CD8-positive, alpha-beta T cell (primary cell): ENCODE measurements at regions of chr1 and their contacts with region 1.

Region 1: DNA sequence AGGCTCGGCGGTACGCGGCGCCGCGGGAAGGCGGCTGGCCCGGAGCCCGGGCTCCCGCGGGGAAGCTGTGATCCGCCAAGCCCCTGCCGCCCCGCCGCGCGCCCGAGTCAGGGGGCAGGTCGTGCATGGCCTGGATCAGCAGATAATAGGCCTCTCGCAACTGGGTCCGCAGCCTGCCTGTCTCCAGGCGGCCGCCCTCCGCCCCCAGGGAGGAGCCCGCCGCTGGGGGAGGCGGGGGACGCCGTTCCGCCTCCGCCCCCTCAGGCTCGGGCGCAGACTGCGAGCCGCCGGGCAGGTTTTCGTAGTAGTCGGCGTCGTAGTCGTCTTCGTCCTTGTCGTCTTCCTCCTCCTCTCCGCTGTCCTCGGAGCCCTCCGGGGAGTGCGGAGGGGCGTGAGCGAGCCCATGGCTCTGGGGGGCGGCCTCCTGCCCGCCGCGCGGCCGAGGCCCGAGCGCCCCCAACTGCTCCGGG is at the start of gene SYDE2:
- DNase-seq: peak; percentile 70 to 91 (median 79)
- ATAC-seq: peak; percentile 83
- H3K4me3 ChIP-seq: peak within 1 kb of the TSS; percentile 68 to 94
- H3K4me3 Mint-ChIP-seq: peak within 1 kb of the TSS; percentile 100
- H3K27ac ChIP-seq: peak within 1 kb of the TSS; percentile 63 to 94
- H3K27ac Mint-ChIP-seq: peak within 1 kb of the TSS; percentile 100
- H3K4me1 ChIP-seq: peaks cover 27% of the 10 kb centered on the region
- H3K4me1 Mint-ChIP-seq: peaks cover 48% of the 10 kb centered on the region
- H3K27me3 ChIP-seq: peaks cover 0 to 5% of the 10 kb centered on the region in 2 experiments
- H3K27me3 Mint-ChIP-seq: peaks cover 4% of the 10 kb centered on the region
- CTCF ChIP-seq: no peak
- total RNA-seq, gene SYDE2: 6.2 to 6.4 TPM

Region 2: GRCh38 chr1:84077476-84078107 is 1123.3 kb before region 1 on chr1:
- CTCF ChIA-PET with region 1: no interaction called
- POLR2A ChIA-PET with region 1: no interaction called
- intact Hi-C with region 1: loop called in 1 of 2 experiments (anchors 5 kb)
- DNase-seq: peak; percentile 48 to 88 (median 74)
- ATAC-seq: peak; percentile 89
- H3K4me3 ChIP-seq: peak overlapping the region; percentile 90 to 91
- H3K4me3 Mint-ChIP-seq: peak overlapping the region; percentile 87
- H3K27ac ChIP-seq: peak overlapping the region; percentile 72 to 76
- H3K27ac Mint-ChIP-seq: peak overlapping the region; percentile 86
- H3K4me1 ChIP-seq: peaks cover 14% of the 10 kb centered on the region
- H3K4me1 Mint-ChIP-seq: peaks cover 13% of the 10 kb centered on the region
- H3K27me3 ChIP-seq: no peaks in the 10 kb centered on the region
- H3K27me3 Mint-ChIP-seq: no peaks in the 10 kb centered on the region
- CTCF ChIP-seq: no peak

Region 3: GRCh38 chr1:84795966-84796600 is 404.8 kb before region 1 on chr1:
- CTCF ChIA-PET with region 1: no interaction called
- POLR2A ChIA-PET with region 1: no interaction called
- intact Hi-C with region 1: no loop called
- DNase-seq: no peak
- ATAC-seq: no peak
- H3K4me3 ChIP-seq: no peak overlapping the region
- H3K4me3 Mint-ChIP-seq: no peak overlapping the region
- H3K27ac ChIP-seq: no peak overlapping the region
- H3K27ac Mint-ChIP-seq: no peak overlapping the region
- H3K4me1 ChIP-seq: no peaks in the 10 kb centered on the region
- H3K4me1 Mint-ChIP-seq: peaks cover 4% of the 10 kb centered on the region
- H3K27me3 ChIP-seq: no peaks in the 10 kb centered on the region
- H3K27me3 Mint-ChIP-seq: no peaks in the 10 kb centered on the region
- CTCF ChIP-seq: no peak

Region 4: GRCh38 chr1:84996846-84997666 is 203.8 kb before region 1 on chr1 and contains the start of gene MCOLN2:
- CTCF ChIA-PET with region 1: no interaction called
- POLR2A ChIA-PET with region 1: no interaction called
- intact Hi-C with region 1: loop called (anchors 2 to 5 kb)
- DNase-seq: peak; percentile 16 to 77 (median 51)
- ATAC-seq: peak; percentile 69
- H3K4me3 ChIP-seq: peak within 1 kb of the TSS; percentile 66 to 84
- H3K4me3 Mint-ChIP-seq: peak within 1 kb of the TSS; percentile 84
- H3K27ac ChIP-seq: peak within 1 kb of the TSS; percentile 28 to 81
- H3K27ac Mint-ChIP-seq: peak within 1 kb of the TSS; percentile 57
- H3K4me1 ChIP-seq: peaks cover 20% of the 10 kb centered on the region
- H3K4me1 Mint-ChIP-seq: peaks cover 34% of the 10 kb centered on the region
- H3K27me3 ChIP-seq: no peaks in the 10 kb centered on the region
- H3K27me3 Mint-ChIP-seq: peaks cover 23% of the 10 kb centered on the region
- CTCF ChIP-seq: no peak
- total RNA-seq, gene MCOLN2: 12.7 to 23.1 TPM

Region 5: GRCh38 chr1:85061711-85062424 is 139.0 kb before region 1 on chr1:
- CTCF ChIA-PET with region 1: no interaction called
- POLR2A ChIA-PET with region 1: no interaction called
- intact Hi-C with region 1: loop called (anchors 1 to 5 kb)
- DNase-seq: peak; percentile 64 to 96 (median 81)
- ATAC-seq: peak; percentile 99
- H3K4me3 ChIP-seq: peak overlapping the region; percentile 38 to 49
- H3K4me3 Mint-ChIP-seq: peak overlapping the region; percentile 84
- H3K27ac ChIP-seq: peak overlapping the region in 1 of 2 experiments; percentile 29
- H3K27ac Mint-ChIP-seq: peak overlapping the region; percentile 72
- H3K4me1 ChIP-seq: peaks cover 4% of the 10 kb centered on the region
- H3K4me1 Mint-ChIP-seq: peaks cover 14% of the 10 kb centered on the region
- H3K27me3 ChIP-seq: no peaks in the 10 kb centered on the region
- H3K27me3 Mint-ChIP-seq: peaks cover 12% of the 10 kb centered on the region
- CTCF ChIP-seq: no peak

Region 6: DNA sequence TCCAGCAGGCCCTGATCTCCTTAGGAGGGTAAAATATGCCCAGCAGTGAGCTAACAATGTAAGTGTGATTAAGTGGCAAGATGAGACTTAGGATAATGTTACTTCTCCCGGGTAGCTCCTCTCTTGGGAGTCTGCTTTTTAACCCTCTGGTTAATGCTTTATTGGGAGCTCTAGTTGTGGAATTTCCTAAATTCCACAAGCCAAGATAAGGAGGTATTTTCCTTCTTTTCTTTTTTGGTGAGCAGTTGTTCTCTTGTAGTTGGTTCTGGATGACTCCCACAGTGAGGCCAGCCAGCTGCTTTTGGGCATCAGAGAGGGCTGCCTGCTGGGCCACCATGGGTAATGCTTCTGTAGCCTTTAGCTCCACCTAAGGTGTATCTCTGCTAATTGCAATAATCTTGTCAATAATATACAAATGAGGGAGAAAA is 39.3 kb after region 1 on chr1:
- CTCF ChIA-PET with region 1: interaction called, 5 read pairs
- POLR2A ChIA-PET with region 1: no interaction called
- intact Hi-C with region 1: loop called in 1 of 2 experiments (anchors 5 kb)
- DNase-seq: peak in 2 of 9 experiments; percentile 35 to 47
- ATAC-seq: peak; percentile 61
- H3K4me3 ChIP-seq: no peak overlapping the region
- H3K4me3 Mint-ChIP-seq: no peak overlapping the region
- H3K27ac ChIP-seq: no peak overlapping the region
- H3K27ac Mint-ChIP-seq: no peak overlapping the region
- H3K4me1 ChIP-seq: no peaks in the 10 kb centered on the region
- H3K4me1 Mint-ChIP-seq: peaks cover 13% of the 10 kb centered on the region
- H3K27me3 ChIP-seq: peaks cover 0 to 3% of the 10 kb centered on the region in 2 experiments
- H3K27me3 Mint-ChIP-seq: peaks cover 14% of the 10 kb centered on the region
- CTCF ChIP-seq: no peak

Region 7: GRCh38 chr1:85289207-85289847 is 88.4 kb after region 1 on chr1:
- CTCF ChIA-PET with region 1: no interaction called
- POLR2A ChIA-PET with region 1: no interaction called
- intact Hi-C with region 1: no loop called
- DNase-seq: no peak
- ATAC-seq: no peak
- H3K4me3 ChIP-seq: no peak overlapping the region
- H3K4me3 Mint-ChIP-seq: no peak overlapping the region
- H3K27ac ChIP-seq: no peak overlapping the region
- H3K27ac Mint-ChIP-seq: no peak overlapping the region
- H3K4me1 ChIP-seq: no peaks in the 10 kb centered on the region
- H3K4me1 Mint-ChIP-seq: no peaks in the 10 kb centered on the region
- H3K27me3 ChIP-seq: no peaks in the 10 kb centered on the region
- H3K27me3 Mint-ChIP-seq: no peaks in the 10 kb centered on the region
- CTCF ChIP-seq: no peak

Region 8: DNA sequence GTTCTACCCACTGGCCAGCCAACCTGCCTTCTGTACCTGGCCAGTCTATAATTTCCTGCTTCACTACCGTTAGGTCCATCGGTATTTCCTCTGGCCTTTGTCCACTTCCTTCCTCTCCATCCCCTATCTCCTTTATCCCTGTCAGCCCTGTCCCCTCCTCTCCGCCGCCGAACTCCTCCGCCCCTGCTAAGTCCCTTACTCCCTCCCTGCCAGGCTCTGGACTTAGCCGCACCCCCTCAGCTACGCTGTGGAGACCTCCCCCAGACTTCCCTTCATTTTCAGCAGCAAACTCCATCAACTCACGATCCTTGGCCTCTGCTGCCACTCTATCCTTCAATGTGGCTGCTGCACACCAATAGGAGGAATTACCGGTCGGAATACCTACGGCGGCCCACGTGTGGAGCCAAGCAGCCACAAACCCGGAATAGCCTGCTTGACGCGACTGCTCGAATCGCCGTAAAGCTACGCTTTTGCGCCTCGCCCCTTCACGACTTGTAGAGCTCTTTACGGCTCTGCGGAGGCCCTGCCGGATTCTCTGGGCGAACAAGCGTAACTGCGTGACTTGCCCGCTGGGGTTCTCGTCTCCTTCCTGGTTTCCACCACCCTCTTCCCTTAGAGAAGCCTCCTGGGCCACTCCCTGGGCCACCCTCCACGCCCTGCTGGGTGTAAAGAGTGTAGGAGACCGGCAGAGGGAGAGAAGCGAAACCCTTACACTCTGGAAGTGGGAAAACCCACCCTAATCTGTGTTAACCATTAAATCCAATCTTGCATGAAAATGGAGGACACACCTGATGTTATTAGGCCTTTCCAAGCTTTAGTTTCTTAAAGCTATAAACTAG is 507.3 kb after region 1 on chr1 and contains the start of gene ZNHIT6:
- CTCF ChIA-PET with region 1: no interaction called
- POLR2A ChIA-PET with region 1: no interaction called
- intact Hi-C with region 1: loop called in 1 of 2 experiments (anchors 10 kb)
- DNase-seq: peak; percentile 72 to 95 (median 84)
- ATAC-seq: peak; percentile 95
- H3K4me3 ChIP-seq: peak within 1 kb of the TSS; percentile 89 to 93
- H3K4me3 Mint-ChIP-seq: no peak within 1 kb of the TSS
- H3K27ac ChIP-seq: peak within 1 kb of the TSS; percentile 67 to 79
- H3K27ac Mint-ChIP-seq: no peak within 1 kb of the TSS
- H3K4me1 ChIP-seq: peaks cover 17% of the 10 kb centered on the region
- H3K4me1 Mint-ChIP-seq: peaks cover 30% of the 10 kb centered on the region
- H3K27me3 ChIP-seq: no peaks in the 10 kb centered on the region
- H3K27me3 Mint-ChIP-seq: no peaks in the 10 kb centered on the region
- CTCF ChIP-seq: no peak
- total RNA-seq, gene ZNHIT6: 14.4 to 15.3 TPM